ENCODE measurements at regions of chr3 and their contacts with region 1.

Region 1: GRCh38 chr3:62132027-62132602 is 241.2 kb downstream of the FEZF2 start:
- DNase-seq: no peak
- H3K4me3 ChIP-seq: no peak overlapping the region
- H3K27ac ChIP-seq: no peak overlapping the region
- H3K4me1 ChIP-seq: no peaks in the 10 kb centered on the region
- H3K27me3 ChIP-seq: no peaks in the 10 kb centered on the region
- CTCF ChIP-seq: no peak
- EP300 ChIP-seq: no peak
- POLR2A ChIP-seq: no peak

Region 2: GRCh38 chr3:62159709-62160092 is 27.6 kb after region 1 on chr3:
- intact Hi-C with region 1: loop called in 1 of 4 experiments (anchors 2 kb)
- DNase-seq: peak; percentile 54 to 84 (median 58)
- H3K4me3 ChIP-seq: no peak overlapping the region
- H3K27ac ChIP-seq: peak overlapping the region in 1 of 2 donors; percentile 60
- H3K4me1 ChIP-seq: peaks cover 25% of the 10 kb centered on the region
- H3K27me3 ChIP-seq: no peaks in the 10 kb centered on the region
- CTCF ChIP-seq: no peak
- EP300 ChIP-seq: no peak
- POLR2A ChIP-seq: no peak

Measured in ovary (tissue), 10 donors.